ENCODE measurements at regions of chr1 and their contacts with region 1.

Region 1: GRCh38 chr1:232630047-232630893 is at the start of gene SIPA1L2:
- DNase-seq: peak; percentile 97
- ATAC-seq: peak; percentile 88
- H3K4me3 ChIP-seq: peak within 1 kb of the TSS; percentile 77
- H3K27ac ChIP-seq: peak within 1 kb of the TSS; percentile 30
- H3K4me1 ChIP-seq: peaks cover 34% of the 10 kb centered on the region
- H3K27me3 ChIP-seq: no peaks in the 10 kb centered on the region
- CTCF ChIP-seq: peak; percentile 83
- total RNA-seq, gene SIPA1L2: 8.9 and 9.8 TPM in 2 replicates

Region 2: GRCh38 chr1:231724876-231725724 is 905.2 kb before region 1 on chr1:
- CTCF ChIA-PET with region 1: no interaction called
- POLR2A ChIA-PET with region 1: no interaction called
- intact Hi-C with region 1: loop called (anchors 2 kb)
- DNase-seq: peak; percentile 84
- ATAC-seq: peak; percentile 95
- H3K4me3 ChIP-seq: no peak overlapping the region
- H3K27ac ChIP-seq: no peak overlapping the region
- H3K4me1 ChIP-seq: peaks cover 2% of the 10 kb centered on the region
- H3K27me3 ChIP-seq: no peaks in the 10 kb centered on the region
- CTCF ChIP-seq: peak; percentile 93

Region 3: DNA sequence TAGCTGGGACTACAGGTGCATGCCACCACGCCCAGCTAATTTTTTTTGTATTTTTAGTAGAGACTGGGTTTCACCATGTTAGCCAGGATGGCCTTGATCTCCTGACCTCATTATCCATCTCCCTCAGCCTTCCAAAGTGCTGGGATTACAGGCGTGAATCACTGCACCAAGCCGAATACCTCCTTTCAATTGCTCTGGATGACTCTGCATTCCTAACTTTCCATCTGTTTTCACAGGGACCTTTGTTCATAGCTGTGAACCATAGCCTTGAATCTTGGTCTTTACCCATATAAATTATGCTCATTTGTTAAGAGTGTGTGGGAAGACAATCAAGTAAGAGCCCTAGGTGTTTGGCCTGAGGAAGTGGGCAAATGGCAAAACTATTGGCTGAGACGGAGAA is 580.9 kb before region 1 on chr1:
- CTCF ChIA-PET with region 1: interaction called, 3 read pairs
- POLR2A ChIA-PET with region 1: interaction called, 17 read pairs
- intact Hi-C with region 1: no loop called
- DNase-seq: no peak
- ATAC-seq: no peak
- H3K4me3 ChIP-seq: no peak overlapping the region
- H3K27ac ChIP-seq: no peak overlapping the region
- H3K4me1 ChIP-seq: no peaks in the 10 kb centered on the region
- H3K27me3 ChIP-seq: no peaks in the 10 kb centered on the region
- CTCF ChIP-seq: no peak

Region 4: DNA sequence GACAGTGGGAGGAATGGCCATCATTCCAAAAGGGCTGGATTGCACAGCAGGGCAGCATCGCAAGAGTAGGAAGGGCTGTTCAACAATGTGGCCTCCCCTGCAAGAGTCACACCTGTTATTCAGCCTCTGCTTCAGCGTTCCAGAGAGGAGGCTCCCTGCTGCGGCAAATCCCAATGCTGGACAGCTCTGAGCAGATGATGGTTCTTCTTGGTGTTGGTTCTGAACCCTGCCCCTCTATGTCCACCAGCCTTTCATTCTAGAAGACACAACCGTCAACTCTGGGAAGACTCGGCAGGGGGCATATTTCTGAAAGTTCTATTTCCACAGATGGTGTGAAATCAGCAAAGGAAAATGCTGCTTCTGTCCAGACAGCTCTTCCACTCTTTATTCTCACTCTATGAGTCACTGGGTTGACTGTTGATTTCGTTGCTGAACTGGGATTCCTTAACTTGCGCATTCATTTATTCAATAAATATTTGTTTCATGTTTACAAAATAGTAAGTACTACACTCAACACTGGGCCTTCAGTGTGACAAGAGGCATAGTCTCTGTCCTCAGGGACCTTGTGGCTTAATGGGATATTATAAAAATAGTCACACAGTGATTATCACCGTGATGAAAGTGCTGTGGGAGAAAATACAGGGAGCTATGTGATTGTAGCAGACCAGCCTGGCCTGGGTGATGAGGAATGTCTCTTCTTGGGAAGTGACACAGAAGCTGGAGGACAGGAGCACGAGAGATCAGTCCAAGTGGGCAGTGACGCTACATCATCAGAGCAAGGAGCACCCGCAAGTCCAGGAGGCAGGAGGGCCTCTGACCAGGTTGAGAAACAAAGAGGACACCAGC is 260.6 kb before region 1 on chr1:
- CTCF ChIA-PET with region 1: interaction called, 3 read pairs
- POLR2A ChIA-PET with region 1: interaction called, 11 read pairs
- intact Hi-C with region 1: no loop called
- DNase-seq: no peak
- ATAC-seq: no peak
- H3K4me3 ChIP-seq: no peak overlapping the region
- H3K27ac ChIP-seq: no peak overlapping the region
- H3K4me1 ChIP-seq: no peaks in the 10 kb centered on the region
- H3K27me3 ChIP-seq: no peaks in the 10 kb centered on the region
- CTCF ChIP-seq: no peak

Region 5: GRCh38 chr1:232950197-232951176 is 320.2 kb after region 1 on chr1 and contains the start of gene NTPCR:
- CTCF ChIA-PET with region 1: no interaction called
- POLR2A ChIA-PET with region 1: no interaction called
- intact Hi-C with region 1: loop called (anchors 1 kb)
- DNase-seq: peak; percentile 98
- ATAC-seq: peak; percentile 77
- H3K4me3 ChIP-seq: peak within 1 kb of the TSS; percentile 81
- H3K27ac ChIP-seq: peak within 1 kb of the TSS; percentile 57
- H3K4me1 ChIP-seq: peaks cover 24% of the 10 kb centered on the region
- H3K27me3 ChIP-seq: no peaks in the 10 kb centered on the region
- CTCF ChIP-seq: 0 out of 2 replicates have a peak, but pooled peaks have one; percentile 6
- total RNA-seq, gene NTPCR: 17.5 and 43.1 TPM in 2 replicates

Region 6: DNA sequence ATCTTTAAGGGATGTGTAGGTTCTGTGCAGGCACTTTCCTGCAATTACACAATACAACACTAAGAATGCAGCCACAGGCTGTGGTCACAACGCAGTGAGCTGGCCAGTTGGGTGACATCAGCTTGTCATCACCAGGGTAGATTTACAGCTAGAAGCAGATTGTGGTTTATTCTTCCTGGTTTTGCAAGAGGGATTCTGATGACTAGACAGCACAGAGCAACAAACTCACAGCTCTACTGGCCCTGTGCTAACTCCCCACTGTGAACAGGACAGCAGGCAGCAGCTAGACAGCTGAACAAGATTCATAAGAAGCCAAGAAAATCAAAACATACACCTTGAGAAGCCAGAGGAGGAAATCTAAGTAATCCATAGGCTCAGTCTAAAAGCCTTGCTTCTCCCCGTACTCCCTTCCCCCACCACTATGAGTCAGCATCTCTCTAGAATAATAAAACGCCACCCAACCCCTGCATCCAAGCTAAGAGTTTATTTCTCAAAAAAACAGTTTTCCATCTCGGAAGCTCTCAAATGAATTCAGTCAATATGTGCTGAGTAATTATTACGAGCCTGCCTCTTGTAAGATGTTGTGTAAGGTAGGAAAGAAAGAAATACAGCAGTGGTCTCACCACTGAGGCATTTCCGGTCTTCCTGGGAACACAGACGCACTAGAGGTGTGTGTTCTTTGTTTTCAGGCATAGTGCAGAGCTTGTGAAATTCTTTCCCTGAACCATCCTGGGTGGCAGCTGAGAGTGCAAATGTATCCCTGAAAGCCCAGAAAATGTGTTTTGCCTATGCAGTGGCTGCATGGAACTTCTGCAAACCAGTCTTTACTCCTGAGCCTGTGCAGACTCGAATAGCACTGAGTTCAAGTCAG is 483.0 kb after region 1 on chr1:
- CTCF ChIA-PET with region 1: no interaction called
- POLR2A ChIA-PET with region 1: no interaction called
- intact Hi-C with region 1: loop called (anchors 2 kb)
- DNase-seq: peak; percentile 99
- ATAC-seq: peak; percentile 84
- H3K4me3 ChIP-seq: peak overlapping the region; percentile 55
- H3K27ac ChIP-seq: peak overlapping the region; percentile 97
- H3K4me1 ChIP-seq: peaks cover 48% of the 10 kb centered on the region
- H3K27me3 ChIP-seq: no peaks in the 10 kb centered on the region
- CTCF ChIP-seq: no peak

Measured in PC-3 (cell line).